HepG2 (cell line): ENCODE measurements at regions of chr19 and their contacts with region 1.

Region 1: GRCh38 chr19:50329146-50329925 is at the start of gene KCNC3:
- DNase-seq: peak; percentile 100
- ATAC-seq: peak; percentile 77
- H3K4me3 ChIP-seq: peak within 1 kb of the TSS; percentile 51 to 80 (median 63)
- H3K27ac ChIP-seq: peak within 1 kb of the TSS; percentile 51
- H3K4me1 ChIP-seq: peaks cover 66% of the 10 kb centered on the region
- H3K27me3 ChIP-seq: no peaks in the 10 kb centered on the region
- CTCF ChIP-seq: no peak
- EP300 ChIP-seq: no peak
- POLR2A ChIP-seq: peak; percentile 45 to 83; a peak in 3 of 4 replicates
- RAD21 ChIP-seq: no peak
- total RNA-seq, gene KCNC3: 0.24 and 0.29 TPM in 2 replicates

Region 2: GRCh38 chr19:50050384-50051224 is 278.7 kb before region 1 on chr19:
- CTCF ChIA-PET with region 1: no interaction called
- POLR2A ChIA-PET with region 1: no interaction called
- in situ Hi-C with region 1: no loop called
- intact Hi-C with region 1: no loop called
- DNase-seq: no peak
- ATAC-seq: no peak
- H3K4me3 ChIP-seq: no peak overlapping the region
- H3K27ac ChIP-seq: no peak overlapping the region
- H3K4me1 ChIP-seq: no peaks in the 10 kb centered on the region; the same call in 1 of the 2 replicates
- H3K27me3 ChIP-seq: no peaks in the 10 kb centered on the region
- CTCF ChIP-seq: no peak
- EP300 ChIP-seq: no peak
- POLR2A ChIP-seq: no peak
- RAD21 ChIP-seq: no peak

Region 3: GRCh38 chr19:50264483-50265186 is 64.7 kb before region 1 on chr19:
- CTCF ChIA-PET with region 1: no interaction called
- POLR2A ChIA-PET with region 1: no interaction called
- in situ Hi-C with region 1: loop called (anchors 5 kb)
- intact Hi-C with region 1: loop called (anchors 5 kb)
- DNase-seq: peak; percentile 45
- ATAC-seq: peak; percentile 66
- H3K4me3 ChIP-seq: no peak overlapping the region
- H3K27ac ChIP-seq: no peak overlapping the region
- H3K4me1 ChIP-seq: peaks cover 12% of the 10 kb centered on the region
- H3K27me3 ChIP-seq: no peaks in the 10 kb centered on the region
- CTCF ChIP-seq: peak; percentile 67
- EP300 ChIP-seq: no peak
- POLR2A ChIP-seq: no peak
- RAD21 ChIP-seq: peak; percentile 61; the same call in 1 of the 2 replicates

Region 4: DNA sequence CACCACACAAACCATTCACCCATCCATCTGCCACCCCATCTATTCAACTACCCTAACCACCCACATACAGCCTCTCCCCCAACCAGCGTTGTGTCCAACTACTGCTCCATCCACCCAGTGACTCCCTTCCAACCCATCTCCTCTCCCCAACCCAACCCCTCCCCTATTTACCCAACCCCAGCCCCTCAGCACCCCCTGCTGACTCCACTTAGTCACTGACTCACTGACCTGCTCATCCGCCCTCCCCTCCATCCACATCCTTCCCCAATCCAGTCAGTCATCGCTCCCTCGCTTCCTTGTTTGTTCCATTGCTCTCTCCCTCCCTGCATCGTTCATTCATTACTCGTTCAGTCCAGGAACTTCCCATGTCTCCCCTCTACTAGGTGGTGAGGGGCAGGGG is 39.3 kb before region 1 on chr19:
- CTCF ChIA-PET with region 1: no interaction called
- POLR2A ChIA-PET with region 1: no interaction called
- in situ Hi-C with region 1: no loop called
- intact Hi-C with region 1: no loop called
- DNase-seq: no peak
- ATAC-seq: no peak; the same call in 2 of the 3 replicates
- H3K4me3 ChIP-seq: no peak overlapping the region
- H3K27ac ChIP-seq: no peak overlapping the region
- H3K4me1 ChIP-seq: no peaks in the 10 kb centered on the region
- H3K27me3 ChIP-seq: no peaks in the 10 kb centered on the region
- CTCF ChIP-seq: peak; percentile 32; the same call in 1 of the 2 replicates
- EP300 ChIP-seq: no peak
- POLR2A ChIP-seq: no peak
- RAD21 ChIP-seq: no peak

Region 5: GRCh38 chr19:50349277-50350057 is 20.1 kb after region 1 on chr19:
- CTCF ChIA-PET with region 1: no interaction called
- POLR2A ChIA-PET with region 1: interaction called, 9 read pairs
- in situ Hi-C with region 1: no loop called
- intact Hi-C with region 1: loop called (anchors 1 kb)
- DNase-seq: peak; percentile 77
- ATAC-seq: peak; percentile 72
- H3K4me3 ChIP-seq: peak overlapping the region; percentile 31 to 65 (median 36); a peak in 5 of 6 replicates
- H3K27ac ChIP-seq: peak overlapping the region; percentile 97
- H3K4me1 ChIP-seq: peaks cover 61% of the 10 kb centered on the region
- H3K27me3 ChIP-seq: no peaks in the 10 kb centered on the region
- CTCF ChIP-seq: peak; percentile 51
- EP300 ChIP-seq: 0 out of 4 replicates have a peak, but pooled peaks of 1 of the 2 experiments have one; percentile 22
- POLR2A ChIP-seq: peak in 1 of 2 experiments; percentile 55; a peak in 1 of 4 replicates
- RAD21 ChIP-seq: no peak

Region 6: DNA sequence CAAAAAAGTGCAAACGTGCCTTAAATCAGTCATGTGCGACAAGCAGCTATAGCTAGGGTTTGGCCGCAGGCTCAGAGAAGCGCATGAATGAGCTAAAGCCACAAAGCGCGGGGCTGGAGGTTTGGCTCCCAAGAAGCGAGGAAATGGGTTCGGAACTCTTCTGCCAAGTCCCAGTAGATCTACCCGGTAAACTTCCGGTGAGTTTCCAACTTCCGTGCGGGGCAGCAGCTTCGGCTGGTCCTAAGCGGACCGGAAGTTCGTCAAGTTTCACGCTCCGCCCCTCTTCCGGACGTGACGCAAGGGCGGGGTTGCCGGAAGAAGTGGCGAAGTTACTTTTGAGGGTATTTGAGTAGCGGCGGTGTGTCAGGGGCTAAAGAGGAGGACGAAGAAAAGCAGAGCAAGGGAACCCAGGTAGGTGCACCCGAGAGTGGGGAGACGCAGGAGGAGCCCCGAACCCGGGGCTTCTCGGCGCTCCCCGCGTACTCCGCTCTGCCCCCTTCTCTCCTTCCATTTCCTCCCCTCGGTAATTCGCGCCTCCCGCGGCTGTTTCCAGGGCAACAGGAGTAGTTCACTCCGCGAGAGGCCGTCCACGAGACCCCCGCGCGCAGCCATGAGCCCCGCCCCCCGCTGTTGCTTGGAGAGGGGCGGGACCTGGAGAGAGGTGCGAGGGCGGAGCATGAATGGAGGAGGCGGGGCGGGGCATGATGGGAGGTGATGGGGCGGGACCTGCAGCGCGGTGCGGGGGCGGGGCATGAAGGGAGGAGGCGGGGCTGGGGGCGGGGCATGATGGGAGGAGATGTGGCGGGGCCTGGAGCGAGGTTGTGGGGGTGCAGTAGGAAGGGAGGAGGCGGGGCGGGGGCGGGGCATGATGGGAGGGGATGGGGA is 47.1 kb after region 1 on chr19 and contains the start of gene NR1H2:
- CTCF ChIA-PET with region 1: no interaction called
- POLR2A ChIA-PET with region 1: interaction called, 10 read pairs
- in situ Hi-C with region 1: no loop called
- intact Hi-C with region 1: no loop called
- DNase-seq: peak; percentile 92
- ATAC-seq: peak; percentile 94
- H3K4me3 ChIP-seq: peak within 1 kb of the TSS; percentile 86 to 94 (median 90)
- H3K27ac ChIP-seq: peak within 1 kb of the TSS; percentile 96
- H3K4me1 ChIP-seq: no peaks in the 10 kb centered on the region
- H3K27me3 ChIP-seq: no peaks in the 10 kb centered on the region; a peak in 1 of 5 replicates
- CTCF ChIP-seq: no peak
- EP300 ChIP-seq: no peak
- POLR2A ChIP-seq: peak; percentile 54 to 61
- RAD21 ChIP-seq: peak; percentile 46; the same call in 1 of the 2 replicates
- total RNA-seq, gene NR1H2: 11.7 and 13.5 TPM in 2 replicates